ENCODE measurements at regions of chr2 and their contacts with region 1.

Region 1: GRCh38 chr2:156341452-156342253 is 9.1 kb upstream of the NR4A2 start:
- DNase-seq: peak; percentile 90
- H3K4me3 Mint-ChIP-seq: peak overlapping the region; percentile 94
- H3K27ac Mint-ChIP-seq: peak overlapping the region; percentile 95
- H3K4me1 Mint-ChIP-seq: peaks cover 35% of the 10 kb centered on the region
- H3K27me3 Mint-ChIP-seq: no peaks in the 10 kb centered on the region
- CTCF ChIP-seq: no peak

Region 2: DNA sequence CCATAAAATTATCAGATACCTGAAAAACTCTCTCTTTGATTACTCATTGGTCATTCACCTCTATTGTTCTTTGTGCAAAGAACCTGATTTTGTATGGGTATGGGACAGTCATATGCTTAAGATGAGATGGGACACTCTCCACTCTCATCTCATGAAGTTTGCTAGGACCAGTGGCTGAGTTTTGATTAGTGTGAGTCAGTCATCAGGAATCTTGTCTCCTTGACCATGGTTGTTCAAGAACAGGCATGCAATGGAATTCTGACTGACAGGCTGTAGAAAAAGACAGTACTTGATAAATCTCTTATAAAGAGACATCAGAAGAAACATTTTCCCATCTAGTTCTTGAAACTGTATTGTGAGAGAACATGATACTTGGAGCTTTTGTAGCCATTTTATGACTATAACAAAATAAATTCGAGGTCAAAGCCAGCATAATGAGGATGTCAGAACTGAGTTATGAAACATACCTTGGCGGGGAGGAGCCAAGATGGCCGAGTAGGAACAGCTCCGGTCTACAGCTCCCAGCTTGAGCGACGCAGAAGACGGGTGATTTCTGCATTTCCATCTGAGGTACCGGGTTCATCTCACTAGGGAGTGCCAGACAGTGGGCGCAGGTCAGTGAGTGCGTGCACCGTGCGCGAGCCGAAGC is 376.1 kb before region 1 on chr2:
- CTCF ChIA-PET with region 1: no interaction called
- intact Hi-C with region 1: no loop called
- DNase-seq: no peak
- H3K4me3 Mint-ChIP-seq: no peak overlapping the region
- H3K27ac Mint-ChIP-seq: no peak overlapping the region
- H3K4me1 Mint-ChIP-seq: no peaks in the 10 kb centered on the region
- H3K27me3 Mint-ChIP-seq: no peaks in the 10 kb centered on the region
- CTCF ChIP-seq: no peak

Region 3: GRCh38 chr2:156215655-156216054 is 126.0 kb before region 1 on chr2:
- CTCF ChIA-PET with region 1: no interaction called
- intact Hi-C with region 1: no loop called
- DNase-seq: no peak
- H3K4me3 Mint-ChIP-seq: no peak overlapping the region
- H3K27ac Mint-ChIP-seq: no peak overlapping the region
- H3K4me1 Mint-ChIP-seq: no peaks in the 10 kb centered on the region
- H3K27me3 Mint-ChIP-seq: no peaks in the 10 kb centered on the region
- CTCF ChIP-seq: no peak

Region 4: DNA sequence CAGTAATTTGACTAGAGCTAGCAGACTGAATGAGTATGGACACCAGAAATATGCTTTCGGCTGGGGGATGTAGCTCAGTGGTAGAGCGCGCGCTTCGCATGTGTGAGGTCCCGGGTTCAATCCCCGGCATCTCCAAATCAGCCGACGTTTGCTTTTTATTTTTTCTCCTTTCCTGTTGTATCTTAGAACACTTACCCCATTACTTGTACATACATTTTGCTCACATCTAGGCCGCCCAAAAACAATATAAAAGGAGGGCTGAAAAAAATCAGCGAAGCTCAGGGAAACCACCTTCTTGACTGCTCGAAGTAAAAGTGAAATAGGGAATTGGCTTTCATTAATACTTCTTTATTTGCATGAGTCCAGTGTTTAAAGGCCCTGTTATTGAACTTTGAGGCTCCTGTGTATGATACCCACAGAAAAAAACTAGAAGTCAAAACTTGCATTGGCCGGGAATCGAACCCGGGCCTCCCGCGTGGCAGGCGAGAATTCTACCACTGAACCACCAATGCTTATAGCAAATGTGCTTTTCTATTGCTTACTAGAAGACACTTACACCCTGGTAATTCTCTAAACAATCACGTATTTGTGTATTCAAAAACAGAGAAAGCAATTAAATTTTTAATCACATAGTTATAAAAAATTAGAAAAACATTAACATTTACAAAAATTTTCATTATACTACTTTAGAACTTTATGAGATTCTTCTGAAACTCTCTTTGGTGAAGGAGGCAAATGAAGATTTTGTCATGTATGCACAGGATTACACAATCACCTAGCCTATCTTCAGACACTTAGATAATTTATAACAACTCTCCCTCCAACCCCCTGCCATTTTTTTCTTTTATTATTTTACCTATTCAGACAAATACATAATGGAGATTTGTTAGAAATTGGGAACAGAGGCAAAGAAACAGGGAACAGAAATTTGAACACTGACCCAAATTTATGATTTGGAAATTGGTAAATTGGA is 59.3 kb after region 1 on chr2:
- CTCF ChIA-PET with region 1: interaction called, 4 read pairs
- intact Hi-C with region 1: loop called (anchors 2 kb)
- DNase-seq: peak; percentile 74
- H3K4me3 Mint-ChIP-seq: peak overlapping the region; percentile 95
- H3K27ac Mint-ChIP-seq: peak overlapping the region; percentile 99
- H3K4me1 Mint-ChIP-seq: peaks cover 35% of the 10 kb centered on the region
- H3K27me3 Mint-ChIP-seq: no peaks in the 10 kb centered on the region
- CTCF ChIP-seq: no peak

Region 5: GRCh38 chr2:156466739-156467405 is 125.2 kb after region 1 on chr2:
- CTCF ChIA-PET with region 1: interaction called, 3 read pairs
- intact Hi-C with region 1: loop called (anchors 10 kb)
- DNase-seq: no peak
- H3K4me3 Mint-ChIP-seq: peak overlapping the region; percentile 31
- H3K27ac Mint-ChIP-seq: peak overlapping the region; percentile 14
- H3K4me1 Mint-ChIP-seq: peaks cover 53% of the 10 kb centered on the region
- H3K27me3 Mint-ChIP-seq: no peaks in the 10 kb centered on the region
- CTCF ChIP-seq: no peak

Region 6: DNA sequence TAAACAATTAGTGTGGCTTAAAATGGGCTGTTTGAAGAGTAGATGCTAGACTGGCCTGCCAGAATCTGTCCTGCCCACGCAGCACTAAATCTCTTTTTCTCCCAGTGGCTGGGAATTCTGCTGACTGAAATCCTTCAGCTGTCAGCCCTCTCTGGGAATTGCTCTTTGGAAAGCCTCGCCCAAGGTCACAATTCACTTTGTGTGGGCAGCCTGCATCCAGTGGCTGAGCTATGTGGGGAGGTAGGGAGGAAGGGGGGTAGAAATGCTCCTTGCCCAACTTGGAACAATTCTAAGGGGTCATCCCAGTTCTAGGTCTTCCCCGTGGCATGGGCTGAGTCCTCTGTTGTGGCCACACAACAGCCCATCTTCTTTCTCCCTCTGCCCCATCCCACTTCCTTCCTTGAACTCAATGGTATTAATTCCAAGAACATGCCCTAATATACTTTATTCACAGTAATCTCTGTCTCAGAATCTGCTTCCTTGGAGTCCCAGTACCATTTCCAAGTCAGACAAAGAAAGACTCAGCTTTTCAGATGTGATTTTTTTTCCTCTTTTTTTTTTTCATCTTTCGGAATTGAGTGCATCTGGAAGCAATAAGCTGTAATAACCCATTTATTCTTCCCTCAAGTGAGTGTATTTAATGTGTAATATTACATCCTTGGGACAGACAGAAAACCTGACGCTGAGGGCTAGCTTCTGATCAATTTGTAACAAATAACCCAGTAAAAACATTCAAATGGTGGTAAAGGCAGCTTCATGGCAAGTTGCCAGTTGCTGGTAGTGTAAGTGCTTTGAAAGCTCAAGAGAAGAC is 283.9 kb after region 1 on chr2:
- CTCF ChIA-PET with region 1: no interaction called
- intact Hi-C with region 1: no loop called
- DNase-seq: no peak
- H3K4me3 Mint-ChIP-seq: no peak overlapping the region
- H3K27ac Mint-ChIP-seq: no peak overlapping the region
- H3K4me1 Mint-ChIP-seq: no peaks in the 10 kb centered on the region
- H3K27me3 Mint-ChIP-seq: no peaks in the 10 kb centered on the region
- CTCF ChIP-seq: no peak

Measured in Calu3 (cell line).